HCT116 (cell line): ENCODE measurements at regions of chr17 and their contacts with region 1.

Region 1: DNA sequence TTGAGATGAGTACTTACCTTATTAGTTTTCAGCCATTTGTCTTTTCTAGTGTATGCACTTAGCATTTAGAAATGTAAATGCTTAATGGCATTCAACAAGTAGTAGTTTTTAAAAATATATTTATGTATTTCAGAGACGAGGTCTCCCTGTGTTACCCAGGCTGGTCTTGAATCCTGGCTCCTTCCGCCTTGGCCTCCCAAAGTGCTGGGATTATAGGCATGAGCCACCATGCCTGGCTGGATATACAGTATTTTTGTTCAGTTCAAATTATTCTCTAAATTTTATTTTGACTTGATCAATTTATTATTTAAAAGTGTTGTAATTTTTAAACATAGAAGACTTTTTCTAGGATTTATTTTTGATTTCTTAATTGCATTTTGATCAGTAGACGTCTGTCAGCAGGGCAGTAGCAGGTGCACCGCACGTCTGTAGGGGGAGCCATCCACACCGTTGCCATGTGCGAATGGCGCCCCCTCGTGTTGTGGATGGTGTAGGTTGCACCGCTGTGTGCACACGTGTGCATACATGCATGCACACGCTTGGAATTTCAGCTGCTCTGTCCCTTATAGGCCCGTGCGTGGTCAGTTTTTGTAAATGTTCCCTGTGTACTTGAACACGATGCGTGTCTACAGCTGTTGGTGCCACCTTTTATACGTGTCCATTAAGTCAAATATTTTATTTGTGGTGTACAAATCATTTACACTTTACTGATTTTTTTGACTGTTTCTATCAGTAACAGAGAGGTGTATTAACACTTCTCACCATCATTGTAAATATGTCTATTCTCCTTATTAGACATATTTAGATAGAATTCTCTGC is 30.6 kb downstream of the RPTOR start:
- DNase-seq: peak; percentile 90
- ATAC-seq: peak; percentile 100
- H3K4me3 ChIP-seq: no peak overlapping the region
- H3K27ac ChIP-seq: no peak overlapping the region
- H3K4me1 ChIP-seq: peaks cover 0 to 5% of the 10 kb centered on the region in 2 experiments; a peak in 2 of 4 replicates
- H3K27me3 ChIP-seq: no peaks in the 10 kb centered on the region
- CTCF ChIP-seq: peak; percentile 100
- POLR2A ChIP-seq: no peak
- RAD21 ChIP-seq: peak; percentile 99

Region 2: GRCh38 chr17:80388175-80388574 is 187.1 kb before region 1 on chr17:
- CTCF ChIA-PET with region 1: no interaction called
- POLR2A ChIA-PET with region 1: no interaction called
- RAD21 ChIA-PET with region 1: no interaction called
- intact Hi-C with region 1: no loop called
- DNase-seq: no peak
- ATAC-seq: peak; percentile 68
- H3K4me3 ChIP-seq: no peak overlapping the region
- H3K27ac ChIP-seq: no peak overlapping the region
- H3K4me1 ChIP-seq: no peaks in the 10 kb centered on the region
- H3K27me3 ChIP-seq: no peaks in the 10 kb centered on the region
- CTCF ChIP-seq: peak; percentile 13 to 42 (median 27); a peak in 3 of 6 replicates
- POLR2A ChIP-seq: no peak
- RAD21 ChIP-seq: peak; percentile 16; the same call in 1 of the 2 replicates

Region 3: GRCh38 chr17:80426681-80427326 is 148.5 kb before region 1 on chr17:
- CTCF ChIA-PET with region 1: interaction called, 6 read pairs
- POLR2A ChIA-PET with region 1: no interaction called
- RAD21 ChIA-PET with region 1: no interaction called
- intact Hi-C with region 1: loop called (anchors 1 kb)
- DNase-seq: peak; percentile 29
- ATAC-seq: peak; percentile 96
- H3K4me3 ChIP-seq: no peak overlapping the region
- H3K27ac ChIP-seq: no peak overlapping the region
- H3K4me1 ChIP-seq: no peaks in the 10 kb centered on the region
- H3K27me3 ChIP-seq: no peaks in the 10 kb centered on the region
- CTCF ChIP-seq: peak; percentile 98 to 99 (median 99)
- POLR2A ChIP-seq: no peak
- RAD21 ChIP-seq: peak; percentile 99

Region 4: GRCh38 chr17:80454557-80455335 is 120.5 kb before region 1 on chr17:
- CTCF ChIA-PET with region 1: interaction called, 4 read pairs
- POLR2A ChIA-PET with region 1: no interaction called
- RAD21 ChIA-PET with region 1: no interaction called
- intact Hi-C with region 1: loop called (anchors 10 kb)
- DNase-seq: peak; percentile 96
- ATAC-seq: peak; percentile 92
- H3K4me3 ChIP-seq: peak overlapping the region; percentile 78 to 82
- H3K27ac ChIP-seq: peak overlapping the region; percentile 91
- H3K4me1 ChIP-seq: peaks cover 11 to 40% of the 10 kb centered on the region in 2 experiments; a peak in 3 of 4 replicates
- H3K27me3 ChIP-seq: no peaks in the 10 kb centered on the region
- CTCF ChIP-seq: no peak
- POLR2A ChIP-seq: peak; percentile 63
- RAD21 ChIP-seq: no peak

Region 5: DNA sequence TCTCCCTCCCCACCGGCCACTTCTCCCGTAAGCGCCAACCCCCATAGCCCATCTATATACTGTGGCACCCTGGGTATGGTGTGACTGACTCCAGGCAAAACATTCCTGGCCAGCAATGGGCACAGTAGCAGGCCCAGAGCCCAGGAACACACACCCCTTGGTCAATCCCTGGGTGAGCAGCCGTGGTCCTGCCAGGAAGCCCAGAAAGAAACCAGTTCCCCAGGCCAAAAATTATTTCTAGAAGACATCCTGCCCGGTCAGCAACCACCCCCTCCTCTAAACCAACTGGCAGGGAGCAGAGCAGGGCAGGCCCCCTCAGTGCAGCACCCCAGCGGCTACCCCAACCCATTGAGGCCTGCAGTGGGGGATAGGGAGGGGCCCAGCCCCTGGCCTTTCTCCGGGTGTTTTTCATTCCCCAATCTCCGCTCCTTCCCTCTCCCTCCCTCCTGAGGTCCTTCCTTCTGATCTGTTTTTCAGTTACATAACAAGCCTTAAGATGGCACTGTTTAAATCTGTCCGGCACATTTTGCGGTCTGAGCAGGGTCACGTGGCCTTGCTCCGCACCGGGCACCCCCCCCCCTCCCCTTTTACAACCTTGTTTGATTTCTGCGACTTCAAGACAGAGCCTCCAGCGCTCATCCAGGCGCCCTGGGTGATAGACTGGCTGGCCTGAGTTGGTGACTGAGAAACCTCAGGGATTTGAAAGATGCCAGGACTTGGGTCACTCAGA is 100.9 kb before region 1 on chr17:
- CTCF ChIA-PET with region 1: interaction called, 5 read pairs
- POLR2A ChIA-PET with region 1: no interaction called
- RAD21 ChIA-PET with region 1: no interaction called
- intact Hi-C with region 1: loop called (anchors 1 kb)
- DNase-seq: peak; percentile 58
- ATAC-seq: peak; percentile 86
- H3K4me3 ChIP-seq: no peak overlapping the region
- H3K27ac ChIP-seq: peak overlapping the region; percentile 2; the same call in 1 of the 2 replicates
- H3K4me1 ChIP-seq: peaks cover 12 to 19% of the 10 kb centered on the region in 2 experiments
- H3K27me3 ChIP-seq: no peaks in the 10 kb centered on the region
- CTCF ChIP-seq: peak; percentile 21 to 66 (median 43); a peak in 4 of 6 replicates
- POLR2A ChIP-seq: no peak
- RAD21 ChIP-seq: no peak; the same call in none of the 2 replicates

Region 6: GRCh38 chr17:80491478-80492342 is 83.6 kb before region 1 on chr17:
- CTCF ChIA-PET with region 1: no interaction called
- POLR2A ChIA-PET with region 1: no interaction called
- RAD21 ChIA-PET with region 1: no interaction called
- intact Hi-C with region 1: no loop called
- DNase-seq: no peak
- ATAC-seq: peak; percentile 65
- H3K4me3 ChIP-seq: no peak overlapping the region
- H3K27ac ChIP-seq: no peak overlapping the region
- H3K4me1 ChIP-seq: peaks cover 8 to 25% of the 10 kb centered on the region in 2 experiments
- H3K27me3 ChIP-seq: peaks cover 3% of the 10 kb centered on the region; the same call in 1 of the 2 replicates
- CTCF ChIP-seq: no peak
- POLR2A ChIP-seq: no peak
- RAD21 ChIP-seq: no peak

Region 7: DNA sequence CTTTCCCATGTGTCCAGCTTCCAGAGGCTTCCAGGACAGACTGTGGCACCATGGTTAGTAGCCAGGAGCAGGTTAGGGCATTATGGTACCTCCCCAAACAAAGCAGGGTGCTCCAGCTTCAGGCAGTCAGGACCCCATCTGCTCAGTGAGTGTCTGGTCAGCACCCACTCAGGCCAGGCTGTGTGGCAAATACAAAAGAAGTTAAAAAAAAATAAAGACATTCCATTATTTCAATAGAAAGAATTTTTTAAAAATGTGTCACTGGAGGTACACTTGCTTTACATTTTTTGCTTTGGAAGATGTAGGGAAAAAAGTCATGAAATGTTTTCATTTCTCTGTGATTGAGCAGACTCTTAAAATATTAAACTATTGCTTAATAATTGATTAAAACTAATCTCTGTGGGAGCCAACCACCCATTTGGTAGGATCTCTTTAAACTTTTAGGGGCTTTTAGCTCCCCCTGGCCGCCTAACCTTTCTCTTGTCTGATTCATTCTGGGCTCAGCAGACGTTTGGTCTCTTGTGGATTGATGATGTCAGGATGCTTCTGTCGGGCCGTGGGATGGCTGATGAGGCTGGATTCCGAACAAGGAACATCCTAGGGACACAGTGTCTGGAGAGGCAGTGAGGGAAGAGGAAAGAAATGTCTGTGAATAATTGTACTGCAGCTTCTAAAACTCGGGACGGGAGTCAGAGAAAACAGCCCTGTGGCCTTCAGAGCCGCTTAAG is 70.4 kb before region 1 on chr17:
- CTCF ChIA-PET with region 1: no interaction called
- POLR2A ChIA-PET with region 1: no interaction called
- RAD21 ChIA-PET with region 1: no interaction called
- intact Hi-C with region 1: no loop called
- DNase-seq: no peak
- ATAC-seq: no peak
- H3K4me3 ChIP-seq: no peak overlapping the region
- H3K27ac ChIP-seq: no peak overlapping the region
- H3K4me1 ChIP-seq: no peaks in the 10 kb centered on the region
- H3K27me3 ChIP-seq: peaks cover 31% of the 10 kb centered on the region; the same call in 1 of the 2 replicates
- CTCF ChIP-seq: no peak
- POLR2A ChIP-seq: no peak
- RAD21 ChIP-seq: no peak

Region 8: DNA sequence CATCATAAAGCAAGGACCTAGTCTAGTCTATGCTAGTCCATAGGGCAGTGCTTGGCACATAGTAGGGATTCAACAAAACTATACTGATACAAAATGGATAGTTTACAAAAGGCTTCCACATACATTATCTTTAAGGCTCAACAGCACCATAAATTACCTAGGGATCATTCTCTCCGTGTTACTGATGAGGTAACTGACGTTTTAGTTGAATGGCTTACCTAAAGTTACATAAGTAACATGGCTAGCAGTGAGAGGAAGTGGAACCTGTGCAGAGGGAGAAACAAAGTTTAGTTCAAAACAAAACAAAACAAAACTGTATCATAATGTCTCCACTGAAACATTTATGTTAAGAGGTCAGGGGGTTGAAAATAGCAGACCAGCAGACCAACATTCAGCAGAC is 22.7 kb before region 1 on chr17:
- CTCF ChIA-PET with region 1: no interaction called
- POLR2A ChIA-PET with region 1: no interaction called
- RAD21 ChIA-PET with region 1: no interaction called
- intact Hi-C with region 1: no loop called
- DNase-seq: no peak
- ATAC-seq: no peak
- H3K4me3 ChIP-seq: no peak overlapping the region
- H3K27ac ChIP-seq: no peak overlapping the region
- H3K4me1 ChIP-seq: peaks cover 0 to 7% of the 10 kb centered on the region in 2 experiments; a peak in 1 of 4 replicates
- H3K27me3 ChIP-seq: no peaks in the 10 kb centered on the region
- CTCF ChIP-seq: no peak
- POLR2A ChIP-seq: no peak
- RAD21 ChIP-seq: no peak

Region 9: DNA sequence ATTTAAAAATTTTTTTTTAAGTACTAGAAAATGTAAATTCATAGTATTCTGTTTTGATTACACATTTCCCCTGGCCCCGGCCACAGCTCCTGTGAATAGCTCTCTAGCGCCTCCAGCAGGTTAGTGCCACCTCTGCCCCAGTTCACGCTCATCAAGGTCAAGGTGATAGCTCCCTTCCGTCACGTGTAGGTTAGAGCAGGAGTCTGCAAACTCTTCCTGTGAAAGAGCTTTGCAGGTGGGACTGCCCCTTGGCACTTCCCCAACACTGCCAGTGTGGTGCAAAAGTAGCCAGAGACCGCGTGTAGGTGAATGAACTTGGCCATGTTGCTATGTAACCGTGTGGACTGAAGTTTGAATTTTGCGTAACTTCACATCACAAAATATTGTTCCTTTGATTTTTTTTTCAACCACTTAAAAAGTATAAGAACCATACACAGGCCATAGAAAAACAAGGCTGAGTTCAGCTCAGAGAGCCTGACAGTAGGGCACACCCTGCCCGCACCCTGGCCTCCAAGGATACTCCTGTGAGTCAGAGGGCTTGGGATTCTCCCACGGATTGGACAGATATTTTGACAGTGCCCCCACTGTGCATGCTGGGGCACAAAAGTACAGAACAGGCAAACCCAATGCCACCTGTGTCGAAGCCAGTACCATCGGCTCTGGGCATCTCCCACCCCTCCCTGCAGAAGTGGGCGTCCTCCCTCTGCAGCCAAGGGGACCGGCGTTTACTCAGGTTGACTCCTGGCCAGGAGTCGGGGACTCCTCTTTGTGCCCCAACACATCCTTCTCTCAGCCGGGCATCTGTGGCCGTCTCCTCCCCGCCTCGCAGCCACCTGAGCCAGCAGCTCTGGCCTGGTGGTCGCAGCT is 324.4 kb after region 1 on chr17:
- CTCF ChIA-PET with region 1: interaction called, 10 read pairs
- POLR2A ChIA-PET with region 1: no interaction called
- RAD21 ChIA-PET with region 1: no interaction called
- intact Hi-C with region 1: loop called (anchors 1 kb)
- DNase-seq: peak; percentile 40
- ATAC-seq: peak; percentile 89
- H3K4me3 ChIP-seq: no peak overlapping the region
- H3K27ac ChIP-seq: no peak overlapping the region
- H3K4me1 ChIP-seq: peaks cover 0 to 5% of the 10 kb centered on the region in 2 experiments; a peak in 1 of 4 replicates
- H3K27me3 ChIP-seq: no peaks in the 10 kb centered on the region
- CTCF ChIP-seq: peak; percentile 87 to 99 (median 97)
- POLR2A ChIP-seq: no peak
- RAD21 ChIP-seq: peak; percentile 91

Region 10: DNA sequence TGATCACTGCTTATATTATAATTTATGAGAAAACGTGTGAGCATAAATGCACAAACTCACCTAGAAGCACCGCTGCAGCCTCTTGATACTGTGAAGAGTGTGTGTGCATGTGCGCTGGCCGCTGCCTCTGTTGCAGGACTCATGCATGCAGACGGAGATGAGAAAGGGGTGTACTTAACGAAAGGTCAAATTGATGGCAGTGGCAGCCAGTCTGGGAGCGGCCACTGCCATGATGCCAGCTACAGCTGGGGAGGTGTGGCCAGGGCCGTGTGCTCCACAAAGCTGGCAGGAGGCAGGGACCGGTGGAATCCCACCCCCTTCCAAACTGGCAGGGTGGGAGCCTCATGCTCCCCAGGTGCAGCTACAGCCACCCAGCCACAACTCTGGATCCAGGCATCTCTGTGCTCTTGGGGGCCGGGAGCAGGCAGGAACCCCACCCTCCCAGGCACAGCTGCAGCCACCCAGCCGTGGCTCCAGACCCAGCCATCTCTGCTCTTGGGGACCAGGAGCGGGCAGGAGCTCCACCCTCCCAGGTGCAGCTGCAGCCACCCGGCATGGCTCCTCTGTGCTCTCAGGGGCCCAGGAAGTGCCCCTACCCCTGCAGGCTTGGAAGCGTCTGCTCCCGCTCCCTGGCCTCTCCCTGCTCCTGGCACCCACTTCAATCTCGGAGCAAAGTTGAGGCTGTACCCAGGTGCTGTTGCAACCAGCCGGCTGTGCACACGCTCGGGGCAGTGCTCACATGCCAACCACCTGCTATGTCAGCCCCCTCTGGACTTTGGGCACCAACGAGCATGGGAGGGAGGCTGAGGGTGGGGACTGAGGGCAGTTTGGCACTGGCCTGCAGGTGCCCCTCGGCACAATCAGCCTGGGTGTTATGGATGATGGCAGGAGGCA is 338.9 kb after region 1 on chr17:
- CTCF ChIA-PET with region 1: no interaction called
- POLR2A ChIA-PET with region 1: no interaction called
- RAD21 ChIA-PET with region 1: no interaction called
- intact Hi-C with region 1: loop called (anchors 5 kb)
- DNase-seq: no peak
- ATAC-seq: no peak
- H3K4me3 ChIP-seq: no peak overlapping the region
- H3K27ac ChIP-seq: no peak overlapping the region
- H3K4me1 ChIP-seq: no peaks in the 10 kb centered on the region
- H3K27me3 ChIP-seq: no peaks in the 10 kb centered on the region
- CTCF ChIP-seq: no peak
- POLR2A ChIP-seq: no peak
- RAD21 ChIP-seq: no peak

Region 11: GRCh38 chr17:80981062-80981902 is 406.0 kb after region 1 on chr17:
- CTCF ChIA-PET with region 1: no interaction called
- POLR2A ChIA-PET with region 1: no interaction called
- RAD21 ChIA-PET with region 1: no interaction called
- intact Hi-C with region 1: loop called (anchors 10 kb)
- DNase-seq: no peak
- ATAC-seq: peak; percentile 57
- H3K4me3 ChIP-seq: no peak overlapping the region
- H3K27ac ChIP-seq: no peak overlapping the region; the same call in 1 of the 2 replicates
- H3K4me1 ChIP-seq: peaks cover 21 to 32% of the 10 kb centered on the region in 2 experiments
- H3K27me3 ChIP-seq: no peaks in the 10 kb centered on the region
- CTCF ChIP-seq: peak; percentile 59 to 95 (median 61)
- POLR2A ChIP-seq: no peak
- RAD21 ChIP-seq: peak; percentile 83